AG04450 (cell line): ENCODE measurements at regions of chr3 and their contacts with region 1.

Region 1: DNA sequence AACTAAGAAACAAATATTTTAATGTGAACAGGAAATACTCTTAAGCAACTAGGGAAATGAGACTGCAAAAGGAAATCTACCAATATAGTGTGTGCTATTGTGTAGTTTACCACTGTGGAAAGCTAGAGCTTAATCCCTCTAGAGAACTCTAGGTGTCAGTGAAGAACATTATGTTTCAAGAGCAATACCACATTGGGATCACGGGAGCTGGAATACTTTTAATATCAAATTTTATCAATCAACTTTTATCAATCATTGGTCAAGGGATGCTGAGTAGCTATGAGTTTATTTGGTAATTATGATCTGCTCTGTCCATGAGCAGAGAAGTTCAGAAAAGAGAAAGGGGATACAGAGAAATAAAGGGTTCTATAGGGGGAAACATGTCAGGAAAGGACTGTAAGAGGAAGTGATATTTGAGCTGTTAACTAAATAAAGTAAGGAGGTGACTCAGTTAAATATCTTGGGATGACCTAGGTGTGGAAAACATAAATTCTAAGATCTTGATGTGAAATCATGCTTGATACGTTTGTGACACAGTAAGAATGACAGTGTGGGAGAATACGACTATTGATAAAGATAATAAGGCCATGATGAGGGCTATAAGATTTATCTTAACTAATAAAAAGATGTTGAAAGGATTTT is 762.2 kb upstream of the ALCAM start:
- DNase-seq: no peak
- H3K4me3 ChIP-seq: no peak overlapping the region
- H3K27ac ChIP-seq: no peak overlapping the region
- H3K27me3 ChIP-seq: no peaks in the 10 kb centered on the region
- CTCF ChIP-seq: peak; percentile 58

Region 2: GRCh38 chr3:104556372-104557078 is 48.0 kb before region 1 on chr3:
- CTCF ChIA-PET with region 1: no interaction called
- POLR2A ChIA-PET with region 1: no interaction called
- DNase-seq: no peak
- H3K4me3 ChIP-seq: no peak overlapping the region
- H3K27ac ChIP-seq: no peak overlapping the region
- H3K27me3 ChIP-seq: no peaks in the 10 kb centered on the region
- CTCF ChIP-seq: no peak

Region 3: GRCh38 chr3:104614564-104614963 is 10.1 kb after region 1 on chr3:
- CTCF ChIA-PET with region 1: interaction called, 11 read pairs
- POLR2A ChIA-PET with region 1: no interaction called
- DNase-seq: no peak
- H3K4me3 ChIP-seq: no peak overlapping the region
- H3K27ac ChIP-seq: no peak overlapping the region
- H3K27me3 ChIP-seq: no peaks in the 10 kb centered on the region
- CTCF ChIP-seq: no peak

Region 4: GRCh38 chr3:104696470-104696869 is 92.0 kb after region 1 on chr3:
- CTCF ChIA-PET with region 1: no interaction called
- POLR2A ChIA-PET with region 1: no interaction called
- DNase-seq: no peak
- H3K4me3 ChIP-seq: no peak overlapping the region
- H3K27ac ChIP-seq: no peak overlapping the region
- H3K27me3 ChIP-seq: no peaks in the 10 kb centered on the region
- CTCF ChIP-seq: no peak

Region 5: DNA sequence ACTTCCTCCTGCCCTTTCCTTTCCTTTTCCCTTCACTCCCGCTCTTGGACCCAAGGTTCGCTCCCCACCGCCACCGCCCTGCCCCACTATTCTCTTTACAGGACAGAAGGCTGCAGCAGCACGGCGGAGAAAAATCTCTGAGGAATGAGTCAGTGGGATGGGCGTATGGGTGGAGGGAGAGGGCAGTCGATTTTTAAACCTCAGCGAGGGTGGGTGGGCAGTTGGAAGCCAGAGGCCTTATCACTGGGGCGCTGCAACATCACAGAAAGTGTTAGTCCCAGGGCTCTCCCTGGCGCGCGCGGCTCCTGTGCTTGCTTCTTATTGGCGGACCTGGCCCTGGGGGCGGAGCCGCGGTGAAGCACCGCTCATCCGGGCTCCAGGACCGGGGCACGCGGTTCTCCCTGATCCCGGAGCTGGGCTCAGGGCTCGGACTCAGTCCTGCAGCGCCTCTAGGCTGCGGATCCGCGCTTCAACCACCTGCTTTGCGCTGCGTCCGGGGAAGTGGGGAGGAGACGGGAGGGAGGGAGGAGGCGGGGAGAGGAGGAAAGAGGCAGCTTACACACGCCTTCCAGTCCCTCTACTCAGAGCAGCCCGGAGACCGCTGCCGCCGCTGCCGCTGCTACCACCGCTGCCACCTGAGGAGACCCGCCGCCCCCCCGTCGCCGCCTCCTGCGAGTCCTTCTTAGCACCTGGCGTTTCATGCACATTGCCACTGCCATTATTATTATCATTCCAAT is 762.0 kb after region 1 on chr3 and contains the start of gene ALCAM:
- CTCF ChIA-PET with region 1: interaction called, 22 read pairs
- POLR2A ChIA-PET with region 1: interaction called, 4 read pairs
- DNase-seq: peak; percentile 98
- H3K4me3 ChIP-seq: peak within 1 kb of the TSS; percentile 96
- H3K27ac ChIP-seq: peak within 1 kb of the TSS; percentile 94
- H3K27me3 ChIP-seq: no peaks in the 10 kb centered on the region
- CTCF ChIP-seq: peak; percentile 70
- polyA plus RNA-seq, gene ALCAM: 198 and 275 TPM in 2 replicates